ENCODE measurements at regions of chr9 and their contacts with region 1.

Region 1: DNA sequence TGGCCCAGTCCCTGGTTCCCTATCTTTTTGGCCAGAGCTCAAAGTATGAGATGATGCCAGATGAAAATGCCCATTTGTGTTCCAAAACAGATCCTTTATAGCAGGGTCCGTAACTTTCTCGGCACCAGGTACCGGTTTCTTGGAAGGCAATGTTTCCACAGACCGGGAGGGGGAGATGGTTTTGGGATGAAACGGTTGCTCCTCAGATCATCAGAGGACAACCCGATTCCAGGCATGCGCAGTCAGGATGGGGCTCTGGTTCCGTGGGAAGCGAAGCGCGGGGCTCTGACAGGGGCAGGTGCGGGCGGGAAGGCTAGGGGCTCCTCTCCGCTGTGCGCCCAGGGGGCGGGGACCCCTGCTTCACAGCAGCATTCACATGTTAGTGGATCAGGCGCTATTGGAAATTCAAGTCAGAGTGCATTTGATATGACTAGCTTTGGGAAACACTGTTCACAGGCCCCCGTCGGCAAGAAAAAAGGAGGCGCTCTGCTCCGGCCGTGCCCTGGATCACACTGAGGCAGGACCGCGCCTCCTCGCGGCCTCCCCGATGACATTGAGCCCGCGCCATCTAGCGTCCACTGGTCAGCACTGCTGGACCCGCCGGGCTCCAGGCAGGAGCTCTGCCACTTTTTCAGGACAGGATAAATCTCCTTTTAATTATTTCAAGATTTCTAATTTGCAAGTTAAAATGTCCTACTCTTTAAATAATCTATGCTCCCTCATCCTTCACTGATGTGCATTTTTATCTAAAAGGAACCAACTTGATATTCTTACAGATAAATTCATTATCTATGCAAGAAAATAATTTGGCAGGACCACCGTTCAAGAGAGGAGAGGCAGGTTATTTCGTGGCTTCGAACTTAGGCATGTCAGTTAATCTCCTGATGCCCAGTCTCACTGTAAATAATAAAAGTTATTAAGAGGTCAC is 190.0 kb downstream of the FANCC start:
- DNase-seq: peak; percentile 86 to 96 (median 91)

Region 2: GRCh38 chr9:94681508-94681907 is 446.0 kb before region 1 on chr9:
- intact Hi-C with region 1: loop called (anchors 2 kb)
- DNase-seq: peak; percentile 67 to 94 (median 86)

Region 3: GRCh38 chr9:94783102-94783664 is 344.3 kb before region 1 on chr9:
- intact Hi-C with region 1: loop called (anchors 5 kb)
- DNase-seq: peak; percentile 21 to 93 (median 76)

Measured in head of caudate nucleus (tissue), 42 donors.